ENCODE measurements at regions of chr7 and their contacts with region 1.

Region 1: GRCh38 chr7:143380255-143380645 is 895 bp upstream of the ZYX start:
- DNase-seq: peak; percentile 92
- ATAC-seq: peak; percentile 55
- H3K4me3 ChIP-seq: peak overlapping the region; percentile 1 to 99 (median 90)
- H3K4me3 Mint-ChIP-seq: peak overlapping the region; percentile 92
- H3K27ac ChIP-seq: peak overlapping the region; percentile 87 to 89
- H3K27ac Mint-ChIP-seq: peak overlapping the region; percentile 93
- H3K4me1 ChIP-seq: peaks cover 43 to 53% of the 10 kb centered on the region in 2 donors
- H3K4me1 Mint-ChIP-seq: peaks cover 28% of the 10 kb centered on the region
- H3K27me3 ChIP-seq: no peaks in the 10 kb centered on the region
- H3K27me3 Mint-ChIP-seq: no peaks in the 10 kb centered on the region
- CTCF ChIP-seq: peak; percentile 85

Region 2: DNA sequence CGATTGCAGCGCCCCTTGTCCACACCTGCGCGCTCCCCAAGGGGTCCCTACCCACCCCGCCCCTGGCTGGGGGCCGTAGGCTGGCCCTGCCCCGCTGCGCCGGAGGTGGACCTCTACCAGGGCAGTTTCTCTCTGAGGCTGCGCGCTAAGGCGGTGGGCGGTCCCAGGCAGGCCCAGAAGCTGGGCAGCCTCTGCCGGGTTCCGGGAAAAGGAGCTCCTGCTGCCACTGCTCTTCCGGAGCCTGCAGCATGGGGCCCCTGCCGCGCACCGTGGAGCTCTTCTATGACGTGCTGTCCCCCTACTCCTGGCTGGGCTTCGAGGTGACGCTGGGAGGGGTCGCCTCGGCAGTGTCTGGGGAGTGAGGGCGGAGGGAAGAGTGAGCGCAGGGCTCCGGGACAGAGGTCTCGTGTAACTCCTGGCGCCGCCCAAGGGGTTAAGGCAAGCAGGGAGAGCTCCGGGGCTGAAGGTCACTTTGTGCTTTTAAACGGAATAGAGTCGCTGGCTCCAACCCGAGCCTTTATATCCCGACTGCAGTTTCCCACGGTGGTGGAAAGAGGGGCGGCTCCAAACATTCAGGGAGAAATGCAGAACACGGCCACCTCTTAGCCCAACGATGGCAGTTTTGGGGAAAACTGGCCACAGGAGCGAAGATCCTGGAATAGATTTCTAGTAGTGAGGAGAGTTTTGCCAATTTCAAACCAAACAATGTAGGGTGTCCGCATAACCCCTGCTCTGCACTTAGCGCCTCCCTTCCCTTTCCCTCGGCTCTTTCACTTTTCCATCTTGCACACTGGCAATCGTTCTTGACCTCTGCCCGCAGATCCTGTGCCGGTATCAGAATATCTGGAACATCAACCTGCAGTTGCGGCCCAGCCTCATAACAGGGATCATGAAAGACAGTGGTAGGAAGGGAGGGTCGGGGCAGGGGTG is 116.7 kb before region 1 on chr7 and contains the start of gene GSTK1:
- CTCF ChIA-PET with region 1: interaction called, 3 read pairs
- POLR2A ChIA-PET with region 1: interaction called, 3 read pairs
- intact Hi-C with region 1: loop called (anchors 2 kb)
- DNase-seq: peak; percentile 71
- ATAC-seq: peak; percentile 95
- H3K4me3 ChIP-seq: peak within 1 kb of the TSS; percentile 73 to 99 (median 90)
- H3K4me3 Mint-ChIP-seq: peak within 1 kb of the TSS; percentile 93
- H3K27ac ChIP-seq: peak within 1 kb of the TSS; percentile 80 to 82
- H3K27ac Mint-ChIP-seq: peak within 1 kb of the TSS; percentile 91
- H3K4me1 ChIP-seq: peaks cover 28 to 38% of the 10 kb centered on the region in 2 donors
- H3K4me1 Mint-ChIP-seq: peaks cover 52% of the 10 kb centered on the region
- H3K27me3 ChIP-seq: no peaks in the 10 kb centered on the region
- H3K27me3 Mint-ChIP-seq: no peaks in the 10 kb centered on the region
- CTCF ChIP-seq: no peak
- total RNA-seq, gene GSTK1: 181 and 183 TPM in 2 replicates

Region 3: GRCh38 chr7:143362131-143363015 is 17.9 kb before region 1 on chr7 and contains the start of gene FAM131B:
- CTCF ChIA-PET with region 1: interaction called, 6 read pairs
- POLR2A ChIA-PET with region 1: no interaction called
- intact Hi-C with region 1: loop called (anchors 2 kb)
- DNase-seq: peak; percentile 44
- ATAC-seq: peak; percentile 54
- H3K4me3 ChIP-seq: peak within 1 kb of the TSS; percentile 25 to 72 (median 54)
- H3K4me3 Mint-ChIP-seq: peak within 1 kb of the TSS; percentile 87
- H3K27ac ChIP-seq: no peak within 1 kb of the TSS
- H3K27ac Mint-ChIP-seq: peak within 1 kb of the TSS; percentile 59
- H3K4me1 ChIP-seq: peaks cover 12% of the 10 kb centered on the region in 2 donors
- H3K4me1 Mint-ChIP-seq: peaks cover 13% of the 10 kb centered on the region
- H3K27me3 ChIP-seq: peaks cover 0 to 61% (median 36%) of the 10 kb centered on the region in 4 experiments
- H3K27me3 Mint-ChIP-seq: peaks cover 64% of the 10 kb centered on the region
- CTCF ChIP-seq: no peak
- total RNA-seq, gene FAM131B: 0.05 and 0.12 TPM in 2 replicates

Region 4: GRCh38 chr7:143416565-143417149 is 36.4 kb after region 1 on chr7:
- CTCF ChIA-PET with region 1: interaction called, 28 read pairs
- POLR2A ChIA-PET with region 1: no interaction called
- intact Hi-C with region 1: loop called (anchors 1 kb)
- DNase-seq: peak; percentile 65
- ATAC-seq: peak; percentile 63
- H3K4me3 ChIP-seq: no peak overlapping the region
- H3K4me3 Mint-ChIP-seq: no peak overlapping the region
- H3K27ac ChIP-seq: no peak overlapping the region
- H3K27ac Mint-ChIP-seq: no peak overlapping the region
- H3K4me1 ChIP-seq: no peaks in the 10 kb centered on the region
- H3K4me1 Mint-ChIP-seq: no peaks in the 10 kb centered on the region
- H3K27me3 ChIP-seq: peaks cover 0 to 33% (median 17%) of the 10 kb centered on the region in 4 experiments
- H3K27me3 Mint-ChIP-seq: peaks cover 54% of the 10 kb centered on the region
- CTCF ChIP-seq: peak; percentile 87